Activated CD4-positive, alpha-beta memory T cell treated with anti-CD3 and anti-CD28 coated beads for 36 hours (primary cell): ENCODE measurements at regions of chrX and their contacts with region 1.

Region 1: DNA sequence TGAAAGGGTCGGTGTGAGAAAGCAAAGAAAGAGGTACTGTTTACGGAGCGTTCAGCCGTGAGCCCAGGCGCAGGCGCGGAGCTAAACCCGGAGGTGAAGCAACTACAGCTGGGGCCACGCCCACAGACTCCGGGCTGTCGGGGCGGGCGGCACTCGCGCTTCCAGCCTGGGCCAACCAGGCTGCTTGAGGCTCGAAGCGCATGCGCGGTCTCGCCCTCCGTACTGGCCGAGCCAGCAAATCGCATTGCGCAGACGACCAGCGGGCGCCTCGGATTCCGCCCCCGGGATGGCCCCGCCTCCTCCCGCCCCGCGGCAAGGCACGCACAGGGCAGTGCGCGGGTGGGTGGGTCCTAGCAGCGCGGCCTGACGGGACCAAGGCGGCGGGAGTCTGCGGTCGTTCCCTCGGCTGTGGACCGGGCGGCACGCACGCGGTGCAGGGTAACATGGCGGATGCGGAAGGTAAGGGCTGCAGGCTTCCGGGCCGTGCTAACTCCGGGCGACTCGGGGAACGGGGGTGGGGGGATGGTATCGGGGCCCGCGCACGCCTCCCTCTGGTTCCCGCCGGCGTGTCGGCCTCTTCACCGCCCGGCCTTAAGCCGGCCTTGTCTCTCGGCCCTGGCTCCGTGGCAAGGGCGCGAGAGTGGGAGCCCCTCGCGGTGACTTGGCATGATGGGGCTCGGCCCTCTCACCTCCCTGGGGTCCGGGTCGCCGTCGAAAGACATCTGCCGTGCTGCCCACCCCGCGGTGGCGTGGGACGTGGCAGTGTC is at the start of gene DKC1:
- DNase-seq: peak; percentile 96
- H3K4me3 Mint-ChIP-seq: peak within 1 kb of the TSS; percentile 85
- H3K27ac Mint-ChIP-seq: peak within 1 kb of the TSS; percentile 91
- H3K4me1 Mint-ChIP-seq: peaks cover 33% of the 10 kb centered on the region
- H3K27me3 Mint-ChIP-seq: no peaks in the 10 kb centered on the region
- total RNA-seq, gene DKC1: 94.0 to 95.5 TPM

Region 2: GRCh38 chrX:154714925-154715324 is 47.8 kb before region 1 on chrX:
- CTCF ChIA-PET with region 1: interaction called, 3 read pairs
- POLR2A ChIA-PET with region 1: interaction called, 3 read pairs
- intact Hi-C with region 1: loop called (anchors 5 kb)
- DNase-seq: peak; percentile 42
- H3K4me3 Mint-ChIP-seq: no peak overlapping the region
- H3K27ac Mint-ChIP-seq: no peak overlapping the region
- H3K4me1 Mint-ChIP-seq: peaks cover 55% of the 10 kb centered on the region
- H3K27me3 Mint-ChIP-seq: no peaks in the 10 kb centered on the region

Region 3: DNA sequence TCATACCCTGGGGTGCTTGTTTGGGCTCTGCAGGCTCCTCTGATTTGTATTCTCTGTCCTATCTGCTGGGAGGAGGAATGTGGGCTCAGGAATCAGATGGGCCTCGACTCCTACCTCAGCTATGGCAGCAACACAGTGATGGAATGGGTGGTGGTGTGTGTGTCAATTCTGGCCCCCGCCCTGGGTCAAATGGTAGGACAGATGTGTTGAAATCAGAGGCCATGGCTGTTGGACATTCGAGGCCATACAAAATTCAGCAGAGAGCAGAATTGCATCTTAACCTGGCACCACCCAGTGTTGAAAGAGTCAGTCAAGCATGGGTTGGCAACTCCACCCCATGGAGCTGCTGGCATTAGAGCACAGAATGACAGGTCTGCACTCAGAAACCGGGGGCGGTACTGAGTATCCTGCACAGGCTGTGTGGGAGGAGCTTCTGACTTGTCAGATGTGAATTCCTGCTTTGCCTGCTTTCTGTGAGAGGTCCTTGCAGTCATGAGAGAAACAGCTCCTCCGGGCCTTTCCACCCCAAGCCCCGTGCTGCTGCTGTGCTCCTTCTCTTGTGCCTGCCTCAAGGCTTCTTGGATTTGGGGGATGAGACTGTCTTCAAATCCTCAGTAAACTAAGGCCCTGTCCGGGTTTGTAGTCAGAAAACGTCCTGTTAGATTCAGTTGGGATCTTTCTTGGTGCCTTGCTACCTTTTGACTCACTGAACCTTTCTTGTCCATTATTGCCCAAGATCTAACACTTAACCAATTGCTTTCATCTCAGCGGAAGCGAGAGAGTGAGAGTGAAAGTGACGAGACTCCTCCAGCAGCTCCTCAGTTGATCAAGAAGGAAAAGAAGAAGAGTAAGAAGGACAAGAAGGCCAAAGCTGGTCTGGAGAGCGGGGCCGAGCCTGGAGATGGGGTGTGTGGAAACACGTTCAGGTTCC is 13.0 kb after region 1 on chrX:
- CTCF ChIA-PET with region 1: interaction called, 6 read pairs
- POLR2A ChIA-PET with region 1: interaction called, 11 read pairs
- intact Hi-C with region 1: no loop called
- DNase-seq: peak; percentile 62
- H3K4me3 Mint-ChIP-seq: no peak overlapping the region
- H3K27ac Mint-ChIP-seq: peak overlapping the region; percentile 78
- H3K4me1 Mint-ChIP-seq: peaks cover 37% of the 10 kb centered on the region
- H3K27me3 Mint-ChIP-seq: no peaks in the 10 kb centered on the region

Region 4: GRCh38 chrX:154799554-154800348 is 37.0 kb after region 1 on chrX:
- CTCF ChIA-PET with region 1: no interaction called
- POLR2A ChIA-PET with region 1: no interaction called
- intact Hi-C with region 1: loop called (anchors 2 kb)
- DNase-seq: no peak
- H3K4me3 Mint-ChIP-seq: no peak overlapping the region
- H3K27ac Mint-ChIP-seq: peak overlapping the region; percentile 84
- H3K4me1 Mint-ChIP-seq: peaks cover 43% of the 10 kb centered on the region
- H3K27me3 Mint-ChIP-seq: no peaks in the 10 kb centered on the region